Naive thymus-derived CD4-positive, alpha-beta T cell (primary cell): ENCODE measurements at regions of chr22 and their contacts with region 1.

Region 1: GRCh38 chr22:41091132-41092022 is 1.0 kb upstream of the EP300 start:
- DNase-seq: peak; percentile 98 to 99 (median 99)
- ATAC-seq: peak; percentile 95
- H3K4me3 ChIP-seq: peak overlapping the region; percentile 99
- H3K4me3 Mint-ChIP-seq: peak overlapping the region; percentile 91 to 100 (median 98)
- H3K27ac ChIP-seq: peak overlapping the region; percentile 99
- H3K27ac Mint-ChIP-seq: peak overlapping the region; percentile 99 to 100 (median 99)
- H3K4me1 ChIP-seq: peaks cover 4 to 5% of the 10 kb centered on the region in 2 donors
- H3K4me1 Mint-ChIP-seq: peaks cover 23 to 35% (median 27%) of the 10 kb centered on the region in 7 donors
- H3K27me3 ChIP-seq: no peaks in the 10 kb centered on the region
- H3K27me3 Mint-ChIP-seq: peaks cover 0 to 2% (median 0%) of the 10 kb centered on the region in 5 donors

Region 2: DNA sequence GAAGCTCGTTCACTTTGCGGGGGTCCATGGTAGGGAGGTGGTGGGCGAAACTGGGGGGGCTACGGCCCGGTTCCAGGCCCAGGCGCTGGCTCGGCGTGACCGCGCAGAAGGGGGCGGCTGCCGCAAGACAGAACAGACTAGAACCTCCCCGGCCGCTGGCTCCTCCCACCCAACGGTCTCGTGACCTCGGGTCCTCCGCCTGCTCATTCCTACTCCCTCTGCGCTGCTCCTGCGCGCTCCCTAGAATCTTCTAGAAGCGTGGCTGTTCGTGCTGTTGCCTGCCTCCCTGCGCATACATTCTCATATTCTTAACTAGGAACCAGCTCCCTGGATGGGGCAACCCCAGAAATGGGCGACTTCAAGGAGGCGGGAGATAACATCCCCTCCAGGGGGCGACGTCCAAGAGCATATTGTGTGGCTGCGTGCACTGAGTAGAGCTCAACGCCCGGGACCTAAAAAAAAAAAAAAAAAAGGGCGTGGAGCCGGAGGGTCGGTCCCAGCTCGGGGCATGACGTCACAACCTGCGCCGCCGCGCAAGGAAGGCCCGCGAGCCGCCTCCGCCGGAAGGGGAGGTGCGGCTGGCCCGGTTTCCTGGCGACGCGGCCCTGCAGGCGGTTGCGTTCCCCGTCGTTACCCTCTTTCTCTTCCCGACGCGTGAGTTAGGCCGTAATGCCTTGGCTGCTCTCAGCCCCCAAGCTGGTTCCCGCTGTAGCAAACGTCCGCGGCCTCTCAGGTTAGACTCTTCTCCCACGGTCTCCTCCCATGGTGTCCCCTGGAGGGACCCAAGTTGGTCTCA is 234.7 kb before region 1 on chr22 and contains the starts of genes ST13 and XPNPEP3:
- CTCF ChIA-PET with region 1: interaction called, 3 read pairs
- POLR2A ChIA-PET with region 1: interaction called, 5 read pairs
- intact Hi-C with region 1: loop called (anchors 1 kb)
- DNase-seq: peak; percentile 96 to 98 (median 97)
- ATAC-seq: peak; percentile 94
- H3K4me3 ChIP-seq: peak within 1 kb of the TSS; percentile 83
- H3K4me3 Mint-ChIP-seq: peak within 1 kb of the TSS; percentile 94 to 100 (median 98)
- H3K27ac ChIP-seq: peak within 1 kb of the TSS; percentile 97
- H3K27ac Mint-ChIP-seq: peak within 1 kb of the TSS; percentile 98 to 100 (median 100)
- H3K4me1 ChIP-seq: peaks cover 24 to 39% of the 10 kb centered on the region in 2 donors
- H3K4me1 Mint-ChIP-seq: peaks cover 25 to 72% (median 64%) of the 10 kb centered on the region in 7 donors
- H3K27me3 ChIP-seq: no peaks in the 10 kb centered on the region
- H3K27me3 Mint-ChIP-seq: peaks cover 0 to 2% (median 0%) of the 10 kb centered on the region in 5 donors
- total RNA-seq, gene ST13: 126 to 247 (median 185) TPM
- total RNA-seq, gene XPNPEP3: 14.4 to 21.8 (median 19.0) TPM

Region 3: GRCh38 chr22:41070665-41071331 is 20.6 kb before region 1 on chr22:
- CTCF ChIA-PET with region 1: no interaction called
- POLR2A ChIA-PET with region 1: interaction called, 4 read pairs
- intact Hi-C with region 1: loop called (anchors 1 to 2 kb)
- DNase-seq: no peak
- ATAC-seq: no peak
- H3K4me3 ChIP-seq: no peak overlapping the region
- H3K4me3 Mint-ChIP-seq: no peak overlapping the region
- H3K27ac ChIP-seq: no peak overlapping the region
- H3K27ac Mint-ChIP-seq: no peak overlapping the region
- H3K4me1 ChIP-seq: no peaks in the 10 kb centered on the region
- H3K4me1 Mint-ChIP-seq: peaks cover 7 to 11% (median 8%) of the 10 kb centered on the region in 7 donors
- H3K27me3 ChIP-seq: no peaks in the 10 kb centered on the region
- H3K27me3 Mint-ChIP-seq: no peaks in the 10 kb centered on the region

Region 4: DNA sequence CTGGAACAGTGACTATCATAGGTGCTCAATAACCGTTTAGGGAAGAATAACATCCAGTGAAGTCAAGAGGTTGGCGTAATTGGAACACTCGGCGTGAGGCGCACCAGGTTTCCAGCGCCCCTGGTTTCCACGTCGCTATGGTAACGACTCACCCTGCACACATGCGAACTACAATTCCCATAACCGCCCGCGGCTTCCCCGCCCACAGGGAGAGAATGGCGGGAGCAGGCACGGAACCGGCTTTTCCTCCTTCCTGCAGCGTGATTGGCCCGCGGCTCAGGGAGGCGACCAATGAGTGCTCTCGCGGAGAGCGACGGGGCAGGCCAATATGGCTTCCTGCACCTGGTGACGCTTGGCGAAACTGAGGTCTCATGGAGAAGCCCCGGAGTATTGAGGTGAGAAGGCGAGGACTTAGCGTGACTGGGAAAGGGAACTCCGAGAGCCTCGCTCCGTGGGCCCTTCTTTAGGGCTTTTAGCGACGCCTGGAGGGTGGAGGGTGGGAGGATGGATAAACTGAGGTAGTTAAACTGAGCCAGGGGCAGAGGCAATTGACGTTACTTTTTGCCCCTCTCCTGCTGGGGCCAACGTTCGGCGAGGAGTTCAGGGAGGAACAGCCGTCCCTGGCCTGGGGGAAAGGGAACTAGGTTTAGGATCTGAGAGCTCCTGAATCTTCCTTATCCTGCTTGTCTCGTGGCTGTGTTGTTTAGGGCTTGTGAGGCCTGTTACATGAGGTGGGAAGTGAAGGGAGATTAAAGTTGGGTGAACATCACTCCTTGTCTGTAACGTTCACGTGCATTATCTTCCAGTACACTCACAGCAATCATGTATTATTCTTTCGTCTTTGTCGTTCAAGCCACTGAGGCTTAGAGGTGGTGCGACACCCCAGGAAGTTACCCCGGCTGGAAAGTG is 113.9 kb after region 1 on chr22 and contains the start of gene L3MBTL2:
- CTCF ChIA-PET with region 1: no interaction called
- POLR2A ChIA-PET with region 1: no interaction called
- intact Hi-C with region 1: loop called in 1 of 2 experiments (anchors 1 kb)
- DNase-seq: peak; percentile 89 to 99 (median 97)
- ATAC-seq: peak; percentile 100
- H3K4me3 ChIP-seq: peak within 1 kb of the TSS; percentile 94
- H3K4me3 Mint-ChIP-seq: peak within 1 kb of the TSS; percentile 87 to 100 (median 96)
- H3K27ac ChIP-seq: peak within 1 kb of the TSS; percentile 85
- H3K27ac Mint-ChIP-seq: peak within 1 kb of the TSS; percentile 88 to 98 (median 92)
- H3K4me1 ChIP-seq: peaks cover 4 to 10% of the 10 kb centered on the region in 2 donors
- H3K4me1 Mint-ChIP-seq: peaks cover 10 to 40% (median 36%) of the 10 kb centered on the region in 7 donors
- H3K27me3 ChIP-seq: no peaks in the 10 kb centered on the region
- H3K27me3 Mint-ChIP-seq: peaks cover 0 to 26% (median 0%) of the 10 kb centered on the region in 5 donors
- total RNA-seq, gene L3MBTL2: 31.6 to 45.9 (median 43.3) TPM

Region 5: GRCh38 chr22:41301105-41302020 is 210.0 kb after region 1 on chr22 and contains the start of gene ZC3H7B:
- CTCF ChIA-PET with region 1: no interaction called
- POLR2A ChIA-PET with region 1: no interaction called
- intact Hi-C with region 1: loop called in 1 of 2 experiments (anchors 1 kb)
- DNase-seq: peak; percentile 73 to 89 (median 83)
- ATAC-seq: peak; percentile 98
- H3K4me3 ChIP-seq: peak within 1 kb of the TSS; percentile 22
- H3K4me3 Mint-ChIP-seq: peak within 1 kb of the TSS; percentile 67 to 91 (median 85)
- H3K27ac ChIP-seq: peak within 1 kb of the TSS; percentile 82
- H3K27ac Mint-ChIP-seq: peak within 1 kb of the TSS; percentile 72 to 96 (median 87)
- H3K4me1 ChIP-seq: peaks cover 13 to 15% of the 10 kb centered on the region in 2 donors
- H3K4me1 Mint-ChIP-seq: peaks cover 19 to 35% (median 32%) of the 10 kb centered on the region in 7 donors
- H3K27me3 ChIP-seq: no peaks in the 10 kb centered on the region
- H3K27me3 Mint-ChIP-seq: no peaks in the 10 kb centered on the region
- total RNA-seq, gene ZC3H7B: 36.9 to 65.9 (median 42.7) TPM

Region 6: GRCh38 chr22:41621099-41621910 is 529.9 kb after region 1 on chr22 and contains the start of gene XRCC6:
- CTCF ChIA-PET with region 1: no interaction called
- POLR2A ChIA-PET with region 1: no interaction called
- intact Hi-C with region 1: loop called in 1 of 2 experiments (anchors 1 kb)
- DNase-seq: peak; percentile 97 to 100 (median 99)
- ATAC-seq: peak; percentile 97
- H3K4me3 ChIP-seq: peak within 1 kb of the TSS; percentile 99
- H3K4me3 Mint-ChIP-seq: peak within 1 kb of the TSS; percentile 93 to 99 (median 97)
- H3K27ac ChIP-seq: peak within 1 kb of the TSS; percentile 99
- H3K27ac Mint-ChIP-seq: peak within 1 kb of the TSS; percentile 95 to 100 (median 99)
- H3K4me1 ChIP-seq: peaks cover 18 to 20% of the 10 kb centered on the region in 2 donors
- H3K4me1 Mint-ChIP-seq: peaks cover 22 to 63% (median 44%) of the 10 kb centered on the region in 7 donors
- H3K27me3 ChIP-seq: no peaks in the 10 kb centered on the region
- H3K27me3 Mint-ChIP-seq: peaks cover 0 to 3% (median 0%) of the 10 kb centered on the region in 5 donors
- total RNA-seq, gene XRCC6: 139 to 270 (median 160) TPM